H1 (cell line): ENCODE measurements at regions of chr1 and their contacts with region 1.

Region 1: DNA sequence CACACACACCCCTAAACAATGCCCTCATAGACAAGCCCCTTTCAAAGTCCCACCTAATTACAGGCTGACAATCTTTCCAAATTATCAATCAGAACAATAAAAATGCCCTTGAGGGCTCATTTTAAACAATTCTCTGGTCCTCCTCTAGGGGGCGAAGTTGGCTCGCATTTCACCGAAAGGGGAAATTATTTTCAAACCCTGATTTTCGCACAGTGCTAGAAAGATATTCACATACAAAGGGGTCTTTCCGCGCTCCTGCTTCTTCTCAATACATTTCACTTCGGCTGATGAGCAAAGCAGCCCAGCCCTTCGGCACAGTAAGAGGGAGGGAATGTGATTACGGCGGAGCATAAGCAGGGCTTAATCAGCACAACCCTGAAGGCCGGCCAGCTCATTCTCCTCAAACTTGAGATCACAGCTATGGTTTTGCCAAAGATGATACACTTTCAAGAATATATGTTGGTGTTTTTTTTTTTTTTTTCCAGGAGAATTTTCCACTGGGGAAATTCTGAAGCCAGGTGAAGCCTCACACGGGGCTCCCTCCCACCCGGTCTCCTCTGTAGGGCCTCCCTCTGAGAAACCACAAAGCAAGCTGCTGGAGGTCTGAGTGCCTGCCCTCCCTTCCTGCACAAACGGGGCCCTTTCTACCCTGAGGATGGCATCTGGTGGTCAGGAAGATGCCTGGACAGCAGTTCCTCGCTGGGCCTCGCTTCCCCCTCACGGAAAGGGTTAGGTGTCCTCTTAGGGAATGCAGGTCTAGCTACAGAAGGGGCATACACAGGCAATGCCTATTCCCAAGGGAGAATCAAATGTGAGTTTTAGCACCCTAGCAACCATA is 66.9 kb downstream of the GNG12 start:
- DNase-seq: peak in 1 of 2 experiments; percentile 66
- H3K4me3 ChIP-seq: peak overlapping the region in 1 of 4 experiments; percentile 49; a peak in 3 of 8 replicates
- H3K27ac ChIP-seq: no peak overlapping the region
- H3K4me1 ChIP-seq: peaks cover 0 to 4% (median 3%) of the 10 kb centered on the region in 4 experiments; a peak in 4 of 7 replicates
- H3K27me3 ChIP-seq: no peaks in the 10 kb centered on the region
- CTCF ChIP-seq: peak in 2 of 3 experiments; percentile 67 to 74; a peak in 3 of 4 replicates
- EP300 ChIP-seq: no peak
- POLR2A ChIP-seq: no peak
- RAD21 ChIP-seq: peak; percentile 75 to 83

Region 2: DNA sequence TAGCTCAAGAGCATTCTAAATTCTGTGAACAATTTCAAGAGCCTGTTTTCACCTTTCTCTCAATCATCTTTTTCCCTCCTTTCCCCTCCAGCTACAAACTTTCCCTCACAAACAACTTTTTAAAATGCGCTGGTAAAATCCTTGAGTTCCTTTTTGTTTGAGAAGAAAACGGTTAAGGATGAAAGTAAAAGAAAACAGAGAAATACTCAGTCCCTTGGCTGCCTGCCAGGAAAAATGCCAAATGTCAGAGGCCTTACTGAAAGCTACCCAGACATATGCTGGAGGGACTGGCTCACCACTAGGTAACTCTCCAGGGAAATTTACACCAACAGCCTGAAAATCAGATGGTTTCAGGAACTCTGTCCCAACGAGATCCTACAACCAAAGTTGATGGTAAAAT is 325.2 kb before region 1 on chr1:
- CTCF ChIA-PET with region 1: no interaction called
- POLR2A ChIA-PET with region 1: no interaction called
- DNase-seq: no peak
- H3K4me3 ChIP-seq: no peak overlapping the region
- H3K27ac ChIP-seq: no peak overlapping the region
- H3K4me1 ChIP-seq: no peaks in the 10 kb centered on the region
- H3K27me3 ChIP-seq: no peaks in the 10 kb centered on the region
- CTCF ChIP-seq: no peak
- EP300 ChIP-seq: no peak
- POLR2A ChIP-seq: no peak
- RAD21 ChIP-seq: no peak

Region 3: DNA sequence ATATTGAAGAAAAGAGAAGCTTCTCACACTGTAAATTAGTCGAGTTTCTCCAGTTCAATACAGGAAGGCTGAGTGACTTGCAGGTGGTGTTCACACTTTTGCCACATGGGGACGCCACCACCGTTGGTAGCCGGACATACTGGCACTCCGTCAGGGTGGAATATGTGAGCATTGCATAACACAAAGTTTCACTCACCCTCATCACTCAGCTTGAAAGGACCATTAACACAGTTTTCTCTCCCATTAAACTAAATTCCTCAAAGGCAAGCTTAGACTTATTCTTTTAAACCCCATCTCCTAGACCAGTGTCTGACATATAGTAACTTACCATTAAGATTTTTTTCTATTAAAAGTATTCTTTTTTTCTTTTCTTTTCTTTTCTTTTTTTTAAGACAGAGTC is 230.9 kb before region 1 on chr1:
- CTCF ChIA-PET with region 1: interaction called, 161 read pairs
- POLR2A ChIA-PET with region 1: no interaction called
- DNase-seq: peak; percentile 41 to 86
- H3K4me3 ChIP-seq: no peak overlapping the region
- H3K27ac ChIP-seq: no peak overlapping the region
- H3K4me1 ChIP-seq: no peaks in the 10 kb centered on the region
- H3K27me3 ChIP-seq: no peaks in the 10 kb centered on the region
- CTCF ChIP-seq: peak; percentile 90 to 98 (median 97)
- EP300 ChIP-seq: no peak
- POLR2A ChIP-seq: no peak
- RAD21 ChIP-seq: peak; percentile 90 to 94

Region 4: DNA sequence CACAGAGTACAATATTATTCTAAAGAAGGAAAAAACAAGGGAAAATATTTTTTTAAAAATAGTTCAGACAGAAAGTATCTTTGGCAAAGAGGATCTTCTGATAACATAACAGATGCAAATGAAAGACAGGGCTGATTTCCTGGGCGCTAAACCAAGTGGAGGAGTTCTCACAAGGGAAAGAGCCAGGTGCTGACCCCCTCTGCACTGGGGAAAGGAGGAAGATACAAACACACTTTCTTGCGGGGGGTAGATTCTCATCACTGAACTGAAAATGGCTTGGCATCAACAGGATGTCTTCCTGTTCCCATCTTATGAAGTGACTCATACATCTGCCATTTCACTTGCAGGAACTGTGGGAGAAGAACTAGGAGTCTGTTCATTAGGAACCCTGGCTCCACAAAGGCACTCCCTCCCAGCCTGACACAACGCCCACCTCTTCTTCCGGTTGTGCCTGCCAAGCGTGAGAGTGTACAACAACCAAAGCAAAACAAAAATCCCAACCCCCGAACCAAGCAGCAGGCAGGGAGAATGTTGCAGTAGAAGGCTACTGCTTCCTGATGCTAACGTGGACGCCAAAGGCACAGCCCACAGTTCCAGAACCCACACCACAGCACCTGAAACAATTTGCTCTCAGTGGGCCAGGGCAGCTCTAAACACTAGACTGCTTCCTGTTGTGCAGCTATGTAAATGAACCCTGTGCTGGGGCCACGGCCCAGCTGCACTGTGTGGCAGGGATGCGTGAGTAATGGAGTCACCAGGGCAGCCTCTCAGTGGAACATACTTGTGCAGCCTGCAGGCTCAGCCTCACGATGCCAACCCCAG is 30.3 kb before region 1 on chr1:
- CTCF ChIA-PET with region 1: interaction called, 15 read pairs
- POLR2A ChIA-PET with region 1: no interaction called
- DNase-seq: no peak
- H3K4me3 ChIP-seq: no peak overlapping the region
- H3K27ac ChIP-seq: no peak overlapping the region
- H3K4me1 ChIP-seq: peaks cover 0 to 13% (median 6%) of the 10 kb centered on the region in 4 experiments; a peak in 6 of 7 replicates
- H3K27me3 ChIP-seq: no peaks in the 10 kb centered on the region
- CTCF ChIP-seq: no peak
- EP300 ChIP-seq: no peak
- POLR2A ChIP-seq: no peak
- RAD21 ChIP-seq: no peak

Region 5: GRCh38 chr1:67791686-67792475 is 25.5 kb after region 1 on chr1:
- CTCF ChIA-PET with region 1: interaction called, 150 read pairs
- POLR2A ChIA-PET with region 1: no interaction called
- DNase-seq: no peak
- H3K4me3 ChIP-seq: no peak overlapping the region
- H3K27ac ChIP-seq: no peak overlapping the region
- H3K4me1 ChIP-seq: peaks cover 0 to 7% (median under 1%) of the 10 kb centered on the region in 4 experiments; a peak in 3 of 7 replicates
- H3K27me3 ChIP-seq: no peaks in the 10 kb centered on the region
- CTCF ChIP-seq: no peak
- EP300 ChIP-seq: no peak
- POLR2A ChIP-seq: no peak
- RAD21 ChIP-seq: no peak

Region 6: DNA sequence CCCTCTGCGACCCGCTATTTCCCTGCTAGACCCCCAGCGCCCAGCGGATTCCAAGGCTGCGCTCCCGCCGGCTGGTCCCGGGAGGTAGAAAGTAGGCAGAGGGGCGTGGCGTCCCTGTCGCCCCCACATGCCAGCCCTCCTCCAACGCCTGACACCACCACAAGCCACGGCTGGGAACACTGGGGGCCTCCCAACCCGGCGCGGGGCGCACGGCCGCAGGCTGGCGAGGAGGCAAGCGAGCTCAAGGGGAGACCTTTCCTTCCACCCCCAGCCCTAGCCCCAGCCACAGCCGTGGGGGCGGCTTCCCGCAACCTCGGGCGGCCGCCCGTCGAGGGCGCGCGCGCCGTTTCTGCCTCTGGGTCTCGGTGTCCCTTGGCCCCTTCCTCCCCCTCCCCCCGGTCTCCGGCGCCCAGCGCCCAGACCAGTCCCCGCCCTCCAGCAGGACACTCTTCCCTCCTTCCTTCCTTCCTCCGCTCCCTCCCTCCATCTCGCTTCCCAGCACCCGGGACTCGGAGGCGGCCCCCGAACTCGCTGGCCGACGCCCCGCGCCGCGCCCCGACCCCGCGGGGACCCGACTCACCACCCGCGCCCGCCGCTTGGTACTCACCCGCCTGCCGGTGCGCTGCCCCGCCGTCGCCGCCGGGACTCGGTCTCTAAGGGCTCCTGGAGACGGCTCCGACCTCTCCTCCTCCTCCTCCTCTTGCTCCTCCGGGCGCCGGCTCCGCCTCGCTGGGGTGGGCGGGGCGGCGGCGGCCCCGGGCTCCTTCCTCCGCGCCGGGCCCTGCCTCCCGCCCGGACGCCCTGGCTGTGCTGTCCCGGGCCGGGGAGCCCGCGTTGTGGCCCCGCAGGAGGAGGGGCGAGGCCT is 66.6 kb after region 1 on chr1 and contains the start of gene GNG12:
- CTCF ChIA-PET with region 1: interaction called, 34 read pairs
- POLR2A ChIA-PET with region 1: interaction called, 4 read pairs
- DNase-seq: peak; percentile 63 to 88
- H3K4me3 ChIP-seq: peak within 1 kb of the TSS; percentile 80 to 94 (median 85)
- H3K27ac ChIP-seq: no peak within 1 kb of the TSS
- H3K4me1 ChIP-seq: peaks cover 0 to 8% (median 2%) of the 10 kb centered on the region in 4 experiments; a peak in 4 of 7 replicates
- H3K27me3 ChIP-seq: peaks cover 3 to 22% (median 17%) of the 10 kb centered on the region in 4 experiments; a peak in 6 of 7 replicates
- CTCF ChIP-seq: no peak
- EP300 ChIP-seq: no peak
- POLR2A ChIP-seq: no peak
- RAD21 ChIP-seq: no peak
- total RNA-seq, gene GNG12: 34.5 and 35.8 TPM in 2 replicates

Region 7: DNA sequence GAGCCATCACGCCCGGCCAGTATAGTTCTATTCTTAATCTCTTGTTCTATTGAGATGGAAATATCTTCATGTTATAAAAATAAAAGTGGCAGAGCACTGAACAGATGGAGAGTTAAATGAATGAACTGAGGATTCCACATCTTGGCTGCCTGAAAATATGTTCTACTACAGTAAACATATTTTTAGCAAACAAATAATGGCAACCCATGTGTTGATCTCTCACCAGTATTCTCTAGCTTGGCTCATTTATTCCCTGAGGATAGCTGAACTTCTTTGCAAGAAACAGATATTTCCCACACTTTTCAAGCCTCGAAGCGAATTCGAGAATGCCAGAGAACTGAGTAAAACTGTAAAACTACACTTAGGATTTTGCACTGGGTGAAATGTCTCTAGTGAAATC is 225.2 kb after region 1 on chr1:
- CTCF ChIA-PET with region 1: interaction called, 10 read pairs
- POLR2A ChIA-PET with region 1: no interaction called
- DNase-seq: no peak
- H3K4me3 ChIP-seq: no peak overlapping the region
- H3K27ac ChIP-seq: no peak overlapping the region
- H3K4me1 ChIP-seq: no peaks in the 10 kb centered on the region
- H3K27me3 ChIP-seq: no peaks in the 10 kb centered on the region
- CTCF ChIP-seq: no peak
- EP300 ChIP-seq: no peak
- POLR2A ChIP-seq: no peak
- RAD21 ChIP-seq: no peak